Natural killer cell (primary cell): ENCODE measurements at regions of chr5 and their contacts with region 1.

Region 1: GRCh38 chr5:149828161-149828884 is 98.2 kb downstream of the PPARGC1B start:
- DNase-seq: peak; percentile 73 to 89
- ATAC-seq: peak; percentile 67 to 79 (median 70)
- H3K4me3 ChIP-seq: no peak overlapping the region
- H3K4me3 Mint-ChIP-seq: no peak overlapping the region
- H3K27ac ChIP-seq: no peak overlapping the region
- H3K27ac Mint-ChIP-seq: no peak overlapping the region
- H3K4me1 ChIP-seq: no peaks in the 10 kb centered on the region
- H3K4me1 Mint-ChIP-seq: peaks cover 0 to 5% of the 10 kb centered on the region in 2 donors
- H3K27me3 ChIP-seq: no peaks in the 10 kb centered on the region
- H3K27me3 Mint-ChIP-seq: no peaks in the 10 kb centered on the region
- CTCF ChIP-seq: peak; percentile 82

Region 2: DNA sequence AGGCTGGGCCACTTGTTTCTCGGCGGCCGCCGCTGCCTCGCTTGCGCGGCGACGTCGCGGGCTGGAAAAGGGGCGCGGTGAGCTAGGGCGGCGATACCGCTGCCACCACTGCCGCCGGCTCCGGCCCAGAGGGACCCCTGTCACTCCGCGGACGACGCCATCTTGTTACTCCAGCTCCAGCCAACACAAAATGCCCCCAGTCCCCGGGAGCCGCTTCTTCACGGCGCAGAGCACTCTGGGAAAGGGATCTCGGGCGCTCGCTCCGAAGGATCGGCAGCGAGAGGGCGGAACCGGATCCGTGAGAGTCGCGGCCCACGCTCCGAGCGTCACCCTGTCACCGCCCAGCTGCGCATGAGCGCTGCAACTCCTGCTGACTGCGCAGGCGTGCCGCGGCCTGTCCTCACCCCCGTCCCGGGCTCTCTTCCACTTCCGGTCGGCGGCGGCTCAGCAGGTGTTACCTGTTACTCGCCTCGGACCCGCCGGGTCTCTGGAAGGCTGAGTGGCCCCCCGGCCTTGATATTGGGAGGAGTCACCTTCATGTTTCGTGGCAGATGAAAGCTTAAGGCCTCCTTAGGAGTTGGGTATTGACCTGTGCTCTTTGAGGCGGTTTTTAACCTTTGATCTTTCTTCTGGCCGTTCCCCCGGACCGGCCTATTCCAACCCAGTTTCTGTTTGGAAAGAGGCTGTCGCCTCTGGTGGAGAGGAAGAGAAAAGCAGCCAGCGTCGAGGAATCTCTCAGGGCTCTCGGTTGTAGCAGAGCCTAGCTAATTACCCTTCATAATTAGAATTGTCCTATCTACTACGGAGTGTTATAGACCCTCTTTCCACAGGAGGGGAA is 276.9 kb before region 1 on chr5 and contains the start of gene CSNK1A1:
- intact Hi-C with region 1: no loop called
- DNase-seq: peak; percentile 98 to 100
- ATAC-seq: peak; percentile 79 to 92 (median 87)
- H3K4me3 ChIP-seq: peak within 1 kb of the TSS; percentile 60
- H3K4me3 Mint-ChIP-seq: peak within 1 kb of the TSS; percentile 99
- H3K27ac ChIP-seq: peak within 1 kb of the TSS; percentile 88
- H3K27ac Mint-ChIP-seq: peak within 1 kb of the TSS; percentile 99
- H3K4me1 ChIP-seq: peaks cover 22% of the 10 kb centered on the region
- H3K4me1 Mint-ChIP-seq: peaks cover 43 to 46% of the 10 kb centered on the region in 2 donors
- H3K27me3 ChIP-seq: no peaks in the 10 kb centered on the region
- H3K27me3 Mint-ChIP-seq: no peaks in the 10 kb centered on the region
- CTCF ChIP-seq: peak; percentile 52
- total RNA-seq, gene CSNK1A1: 183 to 209 (median 206) TPM

Region 3: DNA sequence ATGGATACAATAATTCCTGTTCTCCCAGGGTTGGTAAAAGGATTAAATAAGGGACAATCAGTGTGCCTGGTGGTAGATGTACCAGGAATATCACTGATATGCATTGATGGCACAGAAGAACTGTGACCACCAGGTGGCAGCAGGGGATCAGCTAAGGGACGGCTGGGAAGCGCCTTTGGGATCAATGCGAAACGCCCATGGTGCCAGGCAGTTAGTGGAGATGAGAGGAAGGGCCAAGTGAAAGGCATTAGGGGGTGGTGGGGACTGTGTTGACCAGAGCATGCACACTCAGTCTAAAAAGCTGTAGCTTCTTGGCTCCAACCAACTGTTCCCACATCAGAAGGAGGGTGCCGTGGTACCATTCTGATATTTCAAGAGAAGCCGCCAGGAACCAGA is 191.5 kb before region 1 on chr5:
- intact Hi-C with region 1: loop called (anchors 1 kb)
- DNase-seq: peak in 1 of 2 donors; percentile 80
- ATAC-seq: peak in 1 of 3 donors; percentile 82
- H3K4me3 ChIP-seq: no peak overlapping the region
- H3K4me3 Mint-ChIP-seq: no peak overlapping the region
- H3K27ac ChIP-seq: no peak overlapping the region
- H3K27ac Mint-ChIP-seq: no peak overlapping the region
- H3K4me1 ChIP-seq: no peaks in the 10 kb centered on the region
- H3K4me1 Mint-ChIP-seq: peaks cover 0 to 5% of the 10 kb centered on the region in 2 donors
- H3K27me3 ChIP-seq: no peaks in the 10 kb centered on the region
- H3K27me3 Mint-ChIP-seq: no peaks in the 10 kb centered on the region
- CTCF ChIP-seq: peak; percentile 83

Region 4: GRCh38 chr5:149667084-149667828 is 161.1 kb before region 1 on chr5:
- intact Hi-C with region 1: loop called (anchors 1 kb)
- DNase-seq: peak in 1 of 2 donors; percentile 51
- ATAC-seq: peak; percentile 38 to 61 (median 44)
- H3K4me3 ChIP-seq: no peak overlapping the region
- H3K4me3 Mint-ChIP-seq: no peak overlapping the region
- H3K27ac ChIP-seq: no peak overlapping the region
- H3K27ac Mint-ChIP-seq: no peak overlapping the region
- H3K4me1 ChIP-seq: no peaks in the 10 kb centered on the region
- H3K4me1 Mint-ChIP-seq: peaks cover 0 to 3% of the 10 kb centered on the region in 2 donors
- H3K27me3 ChIP-seq: no peaks in the 10 kb centered on the region
- H3K27me3 Mint-ChIP-seq: peaks cover 0 to 3% of the 10 kb centered on the region in 2 donors
- CTCF ChIP-seq: peak; percentile 69

Region 5: DNA sequence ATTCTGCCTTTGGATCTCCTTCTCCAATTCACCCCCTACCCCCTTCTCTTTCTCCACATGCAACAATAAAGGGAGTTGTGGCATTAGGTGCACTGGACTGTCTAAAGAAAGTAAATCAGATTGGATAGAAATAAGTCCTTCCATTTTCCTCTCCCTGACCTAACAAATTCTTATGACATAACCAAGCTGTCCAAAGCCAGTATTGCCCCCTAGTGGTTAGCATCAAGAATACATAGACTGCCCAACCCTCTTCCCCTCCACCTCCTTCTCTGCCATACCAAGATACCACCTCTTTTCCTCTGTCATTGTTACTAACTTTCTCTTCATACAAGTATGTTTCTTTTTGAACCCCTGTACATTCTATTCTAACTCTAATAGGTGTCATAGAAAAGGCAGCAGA is 52.5 kb before region 1 on chr5:
- intact Hi-C with region 1: no loop called
- DNase-seq: peak in 1 of 2 donors; percentile 28
- ATAC-seq: no peak
- H3K4me3 ChIP-seq: no peak overlapping the region
- H3K4me3 Mint-ChIP-seq: no peak overlapping the region
- H3K27ac ChIP-seq: no peak overlapping the region
- H3K27ac Mint-ChIP-seq: no peak overlapping the region
- H3K4me1 ChIP-seq: peaks cover 27% of the 10 kb centered on the region
- H3K4me1 Mint-ChIP-seq: peaks cover 0 to 9% of the 10 kb centered on the region in 2 donors
- H3K27me3 ChIP-seq: no peaks in the 10 kb centered on the region
- H3K27me3 Mint-ChIP-seq: no peaks in the 10 kb centered on the region
- CTCF ChIP-seq: no peak